ENCODE measurements at regions of chr10 and their contacts with region 1.

Region 1: GRCh38 chr10:62183442-62183841 is 85.2 kb downstream of the RTKN2 start:
- DNase-seq: peak; percentile 61
- H3K4me3 Mint-ChIP-seq: peak overlapping the region; percentile 5
- H3K27ac Mint-ChIP-seq: peak overlapping the region; percentile 92
- H3K4me1 Mint-ChIP-seq: peaks cover 88% of the 10 kb centered on the region
- H3K27me3 Mint-ChIP-seq: no peaks in the 10 kb centered on the region

Region 2: GRCh38 chr10:60728056-60728455 is 1455.4 kb before region 1 on chr10:
- intact Hi-C with region 1: loop called (anchors 1 kb)
- DNase-seq: peak; percentile 44
- H3K4me3 Mint-ChIP-seq: peak overlapping the region; percentile 69
- H3K27ac Mint-ChIP-seq: peak overlapping the region; percentile 77
- H3K4me1 Mint-ChIP-seq: peaks cover 90% of the 10 kb centered on the region
- H3K27me3 Mint-ChIP-seq: peaks cover 2% of the 10 kb centered on the region

Region 3: GRCh38 chr10:61903221-61903927 is 280.1 kb before region 1 on chr10:
- intact Hi-C with region 1: loop called (anchors 1 kb)
- DNase-seq: peak; percentile 69
- H3K4me3 Mint-ChIP-seq: peak overlapping the region; percentile 97
- H3K27ac Mint-ChIP-seq: peak overlapping the region; percentile 95
- H3K4me1 Mint-ChIP-seq: peaks cover 60% of the 10 kb centered on the region
- H3K27me3 Mint-ChIP-seq: no peaks in the 10 kb centered on the region

Region 4: GRCh38 chr10:62000037-62000603 is 183.3 kb before region 1 on chr10:
- intact Hi-C with region 1: no loop called
- DNase-seq: no peak
- H3K4me3 Mint-ChIP-seq: no peak overlapping the region
- H3K27ac Mint-ChIP-seq: no peak overlapping the region
- H3K4me1 Mint-ChIP-seq: peaks cover 94% of the 10 kb centered on the region
- H3K27me3 Mint-ChIP-seq: no peaks in the 10 kb centered on the region

Region 5: DNA sequence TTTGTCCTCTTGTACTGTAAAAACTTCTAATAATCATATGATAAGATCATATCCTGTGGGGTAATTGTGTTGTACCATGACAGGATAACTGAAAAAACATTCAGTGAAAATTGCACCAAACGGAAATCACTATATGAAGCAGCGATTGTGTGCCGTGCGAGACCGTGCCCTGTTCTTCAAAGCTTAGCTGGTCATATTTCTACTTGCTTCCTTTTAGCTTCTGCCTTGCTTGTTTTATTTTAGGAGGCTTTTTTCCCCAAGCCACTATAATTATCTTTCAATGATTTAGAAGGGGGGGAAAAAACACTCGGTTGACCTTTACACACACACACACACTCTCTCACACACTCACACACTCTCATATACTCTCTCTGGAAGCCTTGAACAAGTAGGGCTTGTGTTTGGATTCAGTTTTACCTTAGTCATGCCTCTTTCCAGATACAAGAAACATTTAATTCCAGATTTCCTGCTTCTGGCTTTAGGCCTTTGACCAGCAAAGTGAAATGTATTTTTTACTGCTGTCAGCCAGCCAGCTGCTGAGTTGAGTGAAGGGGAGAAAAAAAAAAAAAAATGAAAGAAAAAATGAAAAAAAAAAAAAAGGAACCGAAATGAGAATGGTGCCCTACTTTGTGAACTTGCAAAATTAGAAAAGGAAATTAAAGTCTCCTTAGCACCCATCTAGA is 100.6 kb before region 1 on chr10:
- intact Hi-C with region 1: loop called (anchors 1 kb)
- DNase-seq: peak; percentile 26
- H3K4me3 Mint-ChIP-seq: peak overlapping the region; percentile 78
- H3K27ac Mint-ChIP-seq: peak overlapping the region; percentile 84
- H3K4me1 Mint-ChIP-seq: peaks cover 72% of the 10 kb centered on the region
- H3K27me3 Mint-ChIP-seq: no peaks in the 10 kb centered on the region

Region 6: GRCh38 chr10:62199584-62199983 is 16.1 kb after region 1 on chr10:
- intact Hi-C with region 1: loop called (anchors 1 kb)
- DNase-seq: no peak
- H3K4me3 Mint-ChIP-seq: no peak overlapping the region
- H3K27ac Mint-ChIP-seq: peak overlapping the region; percentile 32
- H3K4me1 Mint-ChIP-seq: peaks cover 39% of the 10 kb centered on the region
- H3K27me3 Mint-ChIP-seq: no peaks in the 10 kb centered on the region

Region 7: DNA sequence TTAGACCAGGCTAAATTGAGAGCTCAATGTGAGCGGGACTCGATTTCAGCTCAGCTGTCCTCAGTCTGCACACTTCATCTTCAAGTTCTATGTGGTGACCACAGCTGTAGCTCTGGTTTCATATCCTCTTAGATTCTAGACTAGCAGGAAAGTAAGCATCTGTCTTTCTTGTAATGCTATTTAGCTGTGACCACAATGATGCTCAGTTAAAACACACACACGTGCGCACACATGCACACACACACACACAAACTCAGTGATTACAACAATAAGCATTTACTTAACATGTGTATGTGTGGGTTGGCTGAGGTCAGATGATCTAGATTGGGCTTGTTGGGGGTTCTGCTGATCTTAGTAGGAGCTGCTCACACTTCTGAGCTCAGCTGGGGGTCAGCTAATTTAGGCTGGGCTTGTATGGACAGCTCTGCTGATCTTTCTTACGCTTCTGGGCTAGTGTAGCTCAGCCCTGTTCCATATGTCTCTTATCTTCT is 273.2 kb after region 1 on chr10:
- intact Hi-C with region 1: no loop called
- DNase-seq: no peak
- H3K4me3 Mint-ChIP-seq: no peak overlapping the region
- H3K27ac Mint-ChIP-seq: no peak overlapping the region
- H3K4me1 Mint-ChIP-seq: peaks cover 23% of the 10 kb centered on the region
- H3K27me3 Mint-ChIP-seq: peaks cover 15% of the 10 kb centered on the region

Region 8: DNA sequence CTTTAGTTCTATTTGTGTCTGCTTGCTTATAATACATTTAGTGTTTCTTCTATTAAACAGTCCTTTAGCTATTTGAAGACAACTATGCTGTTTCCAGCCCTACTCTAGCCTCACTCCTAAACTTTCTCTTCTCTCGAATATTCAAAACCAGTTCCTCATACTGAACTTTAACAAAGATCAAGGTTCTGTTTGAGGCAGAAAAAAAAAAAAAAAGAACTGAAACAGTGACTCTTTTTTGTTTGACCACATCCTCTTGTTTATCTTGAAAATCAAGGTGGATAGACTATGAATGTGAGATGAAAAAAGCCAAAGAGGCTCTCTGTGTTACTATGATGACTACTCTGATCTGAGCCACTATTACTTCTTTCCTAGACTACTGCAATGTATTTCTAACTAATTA is 345.0 kb after region 1 on chr10:
- intact Hi-C with region 1: loop called (anchors 5 kb)
- DNase-seq: no peak
- H3K4me3 Mint-ChIP-seq: no peak overlapping the region
- H3K27ac Mint-ChIP-seq: peak overlapping the region; percentile 1
- H3K4me1 Mint-ChIP-seq: peaks cover 33% of the 10 kb centered on the region
- H3K27me3 Mint-ChIP-seq: peaks cover 9% of the 10 kb centered on the region

Region 9: GRCh38 chr10:62992145-62992721 is 808.8 kb after region 1 on chr10:
- intact Hi-C with region 1: loop called (anchors 5 kb)
- DNase-seq: no peak
- H3K4me3 Mint-ChIP-seq: peak overlapping the region; percentile 58
- H3K27ac Mint-ChIP-seq: peak overlapping the region; percentile 94
- H3K4me1 Mint-ChIP-seq: peaks cover 52% of the 10 kb centered on the region
- H3K27me3 Mint-ChIP-seq: peaks cover 4% of the 10 kb centered on the region

Region 10: DNA sequence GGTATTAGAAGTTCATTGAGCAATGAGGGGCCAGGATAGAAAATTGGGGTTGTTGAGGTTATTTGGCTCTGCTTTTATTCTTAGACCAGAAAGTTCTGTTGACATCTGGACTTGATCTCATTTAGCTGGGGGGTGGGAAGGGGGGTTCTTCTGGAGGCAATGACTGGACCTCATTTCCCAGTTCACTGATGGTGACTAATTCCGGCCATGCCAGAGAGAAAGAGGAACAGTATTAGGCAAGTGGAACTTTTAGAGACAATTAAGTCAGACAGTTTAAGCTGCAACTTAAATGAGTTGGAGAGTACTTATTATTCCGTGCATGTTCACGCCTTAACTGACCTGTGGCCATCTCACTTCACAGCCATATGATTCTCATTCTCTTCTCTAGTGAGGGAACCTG is 1850.3 kb after region 1 on chr10:
- intact Hi-C with region 1: no loop called
- DNase-seq: no peak
- H3K4me3 Mint-ChIP-seq: no peak overlapping the region
- H3K27ac Mint-ChIP-seq: no peak overlapping the region
- H3K4me1 Mint-ChIP-seq: no peaks in the 10 kb centered on the region
- H3K27me3 Mint-ChIP-seq: peaks cover 2% of the 10 kb centered on the region

Measured in activated T-helper 1 cell treated with anti-CD3 and anti-CD28 coated beads, Interleukin-12 subunit alpha, Interleukin-12 subunit beta, Interleukin-2, Interleukin-4 antibody, amounts not matched to agents 30 ng/mL and 10 ng/mL and 1 ng/mL, durations not matched to agents 14 hours and 24 hours and 36 hours (primary cell).